ENCODE measurements at regions of chr2 and their contacts with region 1.

Region 1: DNA sequence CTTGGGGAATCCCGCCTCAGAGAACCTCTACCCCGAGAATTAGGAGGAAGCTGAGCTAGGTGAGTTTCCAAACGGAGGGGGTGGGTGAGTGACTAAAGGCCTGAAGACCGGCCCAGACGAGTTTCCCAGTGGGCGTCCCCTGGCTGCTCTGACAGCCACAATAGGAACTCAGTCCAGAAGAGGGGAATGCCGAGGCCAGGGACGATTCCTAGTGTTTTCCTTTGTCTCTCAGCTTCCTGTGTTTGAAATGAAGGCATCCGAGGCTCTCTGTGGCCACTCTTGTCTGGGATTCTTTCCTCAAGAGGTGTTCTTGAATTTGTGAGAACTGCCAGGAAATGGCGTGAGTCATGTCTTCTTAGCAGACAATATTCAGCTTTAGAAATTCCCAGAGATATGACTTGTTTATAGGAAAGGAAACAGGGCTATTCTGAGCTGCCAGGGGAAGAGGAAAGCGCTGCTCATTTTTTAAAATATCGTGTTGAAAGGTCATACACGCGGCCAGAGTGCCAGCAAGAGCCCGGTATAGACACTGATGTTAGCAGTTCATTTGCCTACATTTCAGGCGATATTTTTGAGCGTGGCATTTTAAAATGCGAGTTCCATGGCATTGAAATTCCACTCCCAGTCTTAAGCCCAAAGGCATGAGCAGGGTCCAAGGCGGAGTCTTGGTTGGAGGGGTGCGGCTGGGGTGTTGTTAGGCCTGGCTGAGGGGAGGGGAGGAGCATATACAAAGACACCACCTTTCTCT is 169.1 kb upstream of the KLF7 start:
- DNase-seq: no peak
- H3K4me3 Mint-ChIP-seq: peak overlapping the region; percentile 28
- H3K27ac Mint-ChIP-seq: peak overlapping the region; percentile 88
- H3K4me1 Mint-ChIP-seq: peaks cover 82% of the 10 kb centered on the region
- H3K27me3 Mint-ChIP-seq: no peaks in the 10 kb centered on the region

Region 2: DNA sequence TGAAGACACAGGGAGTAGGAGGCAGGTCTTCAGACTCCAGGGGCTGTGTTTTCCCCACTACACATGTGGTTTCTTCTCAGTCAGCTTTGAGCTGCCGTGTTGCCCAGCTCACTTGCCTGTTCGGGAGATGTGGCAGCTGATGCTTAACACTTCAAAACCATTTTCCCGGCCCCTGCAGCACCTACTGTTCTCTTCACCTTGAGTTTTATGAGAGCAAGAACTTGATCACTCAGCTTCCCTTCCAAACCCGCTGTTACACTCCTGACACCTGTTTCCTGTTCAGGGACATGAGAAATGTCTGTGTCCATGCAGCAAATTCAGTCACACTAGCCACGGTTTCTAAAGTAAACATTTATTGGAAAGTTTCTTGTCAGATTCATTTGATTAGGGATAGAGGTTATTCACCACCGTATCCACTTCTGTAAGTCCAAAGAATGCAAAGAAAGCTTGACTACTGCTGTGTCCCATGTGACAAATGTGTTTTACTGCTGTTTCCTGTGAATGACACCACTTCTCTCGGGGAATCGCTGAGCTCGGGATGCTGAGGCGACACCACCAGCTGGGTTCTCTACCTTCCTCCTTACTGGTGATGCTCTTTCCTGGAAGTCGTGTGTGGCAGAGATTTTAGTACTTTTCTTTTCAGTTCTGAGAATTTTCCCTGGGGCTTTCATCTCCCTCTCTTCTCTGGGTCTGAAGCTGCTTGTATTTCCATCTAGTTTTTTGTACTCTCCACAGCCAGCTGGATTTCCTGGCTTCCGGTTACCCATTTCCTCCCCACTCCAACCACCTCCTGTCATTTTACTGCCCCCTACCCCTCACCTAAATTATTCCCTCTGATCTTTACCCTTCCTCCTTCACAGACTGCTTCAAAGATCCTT is 260.8 kb before region 1 on chr2:
- intact Hi-C with region 1: loop called (anchors 5 kb)
- DNase-seq: peak; percentile 39
- H3K4me3 Mint-ChIP-seq: peak overlapping the region; percentile 71
- H3K27ac Mint-ChIP-seq: peak overlapping the region; percentile 79
- H3K4me1 Mint-ChIP-seq: peaks cover 46% of the 10 kb centered on the region
- H3K27me3 Mint-ChIP-seq: no peaks in the 10 kb centered on the region

Region 3: GRCh38 chr2:207223051-207223450 is 111.7 kb before region 1 on chr2:
- intact Hi-C with region 1: loop called (anchors 1 kb)
- DNase-seq: no peak
- H3K4me3 Mint-ChIP-seq: peak overlapping the region; percentile 60
- H3K27ac Mint-ChIP-seq: peak overlapping the region; percentile 84
- H3K4me1 Mint-ChIP-seq: peaks cover 46% of the 10 kb centered on the region
- H3K27me3 Mint-ChIP-seq: peaks cover 6% of the 10 kb centered on the region

Region 4: GRCh38 chr2:207269038-207269437 is 65.8 kb before region 1 on chr2:
- intact Hi-C with region 1: no loop called
- DNase-seq: no peak
- H3K4me3 Mint-ChIP-seq: no peak overlapping the region
- H3K27ac Mint-ChIP-seq: no peak overlapping the region
- H3K4me1 Mint-ChIP-seq: peaks cover 11% of the 10 kb centered on the region
- H3K27me3 Mint-ChIP-seq: no peaks in the 10 kb centered on the region

Region 5: GRCh38 chr2:207283356-207283755 is 51.4 kb before region 1 on chr2:
- intact Hi-C with region 1: loop called (anchors 1 kb)
- DNase-seq: no peak
- H3K4me3 Mint-ChIP-seq: peak overlapping the region; percentile 53
- H3K27ac Mint-ChIP-seq: peak overlapping the region; percentile 85
- H3K4me1 Mint-ChIP-seq: peaks cover 76% of the 10 kb centered on the region
- H3K27me3 Mint-ChIP-seq: no peaks in the 10 kb centered on the region

Region 6: DNA sequence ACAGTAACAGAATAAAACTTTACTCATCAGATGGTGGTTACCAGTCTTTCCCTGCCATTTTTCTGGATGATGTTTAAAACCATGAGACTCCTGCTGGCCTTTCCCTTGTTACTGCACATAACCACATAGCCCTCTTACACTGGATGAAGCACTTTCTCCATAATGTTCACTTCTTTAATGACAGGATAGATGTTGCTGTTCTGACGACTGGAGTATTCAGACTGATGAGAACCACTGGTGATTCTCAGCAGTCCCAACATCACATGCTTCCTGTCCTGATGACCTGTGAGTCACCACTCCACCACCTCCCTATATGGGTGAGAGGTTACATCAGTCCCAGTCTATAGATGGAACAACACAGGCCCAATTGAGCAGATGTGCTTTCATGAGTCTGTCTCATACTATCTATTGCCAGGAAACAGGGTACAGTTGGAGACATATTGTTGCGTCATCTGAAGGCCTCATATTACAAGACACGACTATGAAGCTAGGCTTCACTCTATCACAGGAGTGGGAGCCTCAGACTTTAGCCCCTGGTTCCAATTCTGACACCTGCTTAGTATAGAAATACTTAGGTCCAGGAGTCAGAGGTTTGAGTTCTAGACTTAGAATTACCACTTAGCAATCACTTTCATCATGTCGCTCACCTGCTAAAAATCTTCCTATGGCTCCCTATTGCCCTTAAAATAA is 23.3 kb before region 1 on chr2:
- intact Hi-C with region 1: loop called (anchors 1 kb)
- DNase-seq: no peak
- H3K4me3 Mint-ChIP-seq: no peak overlapping the region
- H3K27ac Mint-ChIP-seq: peak overlapping the region; percentile 88
- H3K4me1 Mint-ChIP-seq: peaks cover 49% of the 10 kb centered on the region
- H3K27me3 Mint-ChIP-seq: no peaks in the 10 kb centered on the region